Transverse colon (tissue), 4 donors: ENCODE measurements at regions of chr2 and their contacts with region 1.

Region 1: GRCh38 chr2:220687231-220687843 is 884.8 kb downstream of the EPHA4 start:
- DNase-seq: peak; percentile 75
- H3K4me3 ChIP-seq: no peak overlapping the region
- H3K27ac ChIP-seq: no peak overlapping the region
- H3K4me1 ChIP-seq: no peaks in the 10 kb centered on the region
- H3K27me3 ChIP-seq: no peaks in the 10 kb centered on the region
- CTCF ChIP-seq: peak; percentile 84 to 86 (median 85)
- EP300 ChIP-seq: no peak
- POLR2A ChIP-seq: no peak

Region 2: GRCh38 chr2:220499225-220499624 is 188.1 kb before region 1 on chr2:
- in situ Hi-C with region 1: no loop called
- intact Hi-C with region 1: no loop called
- DNase-seq: no peak
- H3K4me3 ChIP-seq: no peak overlapping the region
- H3K27ac ChIP-seq: no peak overlapping the region
- H3K4me1 ChIP-seq: no peaks in the 10 kb centered on the region
- H3K27me3 ChIP-seq: no peaks in the 10 kb centered on the region
- CTCF ChIP-seq: no peak
- EP300 ChIP-seq: no peak
- POLR2A ChIP-seq: no peak

Region 3: GRCh38 chr2:221969087-221969829 is 1281.9 kb after region 1 on chr2:
- in situ Hi-C with region 1: loop called in 3 of 4 experiments (anchors 25 kb)
- intact Hi-C with region 1: loop called (anchors 5 kb)
- DNase-seq: no peak
- H3K4me3 ChIP-seq: no peak overlapping the region
- H3K27ac ChIP-seq: no peak overlapping the region
- H3K4me1 ChIP-seq: no peaks in the 10 kb centered on the region
- H3K27me3 ChIP-seq: no peaks in the 10 kb centered on the region
- CTCF ChIP-seq: peak; percentile 53 to 65 (median 56)
- EP300 ChIP-seq: no peak
- POLR2A ChIP-seq: no peak